H1 (cell line): ENCODE measurements at regions of chr2 and their contacts with region 1.

Region 1: DNA sequence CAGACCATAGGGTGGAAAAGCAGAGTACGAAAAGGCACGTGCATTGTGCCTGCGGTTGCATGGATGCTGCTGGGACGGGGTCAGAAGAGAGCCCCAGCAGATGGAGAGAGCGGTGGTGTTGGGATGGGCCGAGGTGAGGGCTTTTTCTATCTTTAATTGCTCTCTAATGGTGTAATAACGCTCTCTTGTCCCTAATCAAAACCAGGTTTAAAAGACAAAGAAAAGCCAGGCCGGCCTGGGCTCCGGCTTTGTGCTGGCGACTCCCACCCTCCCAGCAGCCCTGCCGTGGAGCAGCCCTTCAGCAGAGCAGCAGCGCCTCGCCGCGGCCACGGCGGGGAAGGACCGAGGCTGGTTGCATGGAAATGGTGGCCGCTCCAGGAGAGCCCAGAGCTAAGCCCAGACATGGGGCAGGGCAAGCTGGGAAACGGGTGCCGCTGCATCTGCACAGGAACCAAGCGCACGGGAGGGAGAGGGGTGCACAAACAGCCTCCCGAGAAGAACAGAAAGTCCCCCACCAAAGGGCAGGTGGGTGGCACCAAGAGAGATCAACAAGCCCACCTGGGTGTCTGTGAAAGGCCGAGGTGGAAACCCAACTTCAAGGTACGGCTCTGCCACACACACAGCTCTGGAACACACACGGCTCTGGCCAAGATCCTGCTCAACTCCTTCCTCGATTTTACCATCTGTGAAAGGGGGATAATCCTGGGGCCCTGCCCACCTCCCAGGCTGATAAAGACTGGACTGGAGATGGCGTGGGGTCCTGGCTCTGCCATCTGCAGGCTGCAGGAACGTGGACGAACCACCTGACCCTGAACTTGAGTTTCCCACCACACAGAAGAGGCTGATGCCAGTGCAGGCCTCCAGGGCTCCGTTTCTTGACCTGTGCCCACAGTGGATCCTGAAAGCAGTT is 15.0 kb downstream of the HS1BP3 start:
- DNase-seq: peak; percentile 70 to 96
- H3K4me3 ChIP-seq: no peak overlapping the region
- H3K27ac ChIP-seq: no peak overlapping the region
- H3K4me1 ChIP-seq: peaks cover 0 to 8% (median 3%) of the 10 kb centered on the region in 4 experiments; a peak in 4 of 7 replicates
- H3K27me3 ChIP-seq: no peaks in the 10 kb centered on the region
- CTCF ChIP-seq: peak in 2 of 3 experiments; percentile 98; a peak in 3 of 4 replicates
- EP300 ChIP-seq: no peak
- POLR2A ChIP-seq: no peak
- RAD21 ChIP-seq: peak; percentile 100

Region 2: GRCh38 chr2:20419007-20419576 is 216.8 kb before region 1 on chr2:
- CTCF ChIA-PET with region 1: interaction called, 261 read pairs
- POLR2A ChIA-PET with region 1: no interaction called
- DNase-seq: no peak
- H3K4me3 ChIP-seq: no peak overlapping the region
- H3K27ac ChIP-seq: no peak overlapping the region
- H3K4me1 ChIP-seq: peaks cover 0 to 4% (median 2%) of the 10 kb centered on the region in 4 experiments; a peak in 2 of 7 replicates
- H3K27me3 ChIP-seq: no peaks in the 10 kb centered on the region
- CTCF ChIP-seq: no peak
- EP300 ChIP-seq: no peak
- POLR2A ChIP-seq: no peak
- RAD21 ChIP-seq: no peak

Region 3: DNA sequence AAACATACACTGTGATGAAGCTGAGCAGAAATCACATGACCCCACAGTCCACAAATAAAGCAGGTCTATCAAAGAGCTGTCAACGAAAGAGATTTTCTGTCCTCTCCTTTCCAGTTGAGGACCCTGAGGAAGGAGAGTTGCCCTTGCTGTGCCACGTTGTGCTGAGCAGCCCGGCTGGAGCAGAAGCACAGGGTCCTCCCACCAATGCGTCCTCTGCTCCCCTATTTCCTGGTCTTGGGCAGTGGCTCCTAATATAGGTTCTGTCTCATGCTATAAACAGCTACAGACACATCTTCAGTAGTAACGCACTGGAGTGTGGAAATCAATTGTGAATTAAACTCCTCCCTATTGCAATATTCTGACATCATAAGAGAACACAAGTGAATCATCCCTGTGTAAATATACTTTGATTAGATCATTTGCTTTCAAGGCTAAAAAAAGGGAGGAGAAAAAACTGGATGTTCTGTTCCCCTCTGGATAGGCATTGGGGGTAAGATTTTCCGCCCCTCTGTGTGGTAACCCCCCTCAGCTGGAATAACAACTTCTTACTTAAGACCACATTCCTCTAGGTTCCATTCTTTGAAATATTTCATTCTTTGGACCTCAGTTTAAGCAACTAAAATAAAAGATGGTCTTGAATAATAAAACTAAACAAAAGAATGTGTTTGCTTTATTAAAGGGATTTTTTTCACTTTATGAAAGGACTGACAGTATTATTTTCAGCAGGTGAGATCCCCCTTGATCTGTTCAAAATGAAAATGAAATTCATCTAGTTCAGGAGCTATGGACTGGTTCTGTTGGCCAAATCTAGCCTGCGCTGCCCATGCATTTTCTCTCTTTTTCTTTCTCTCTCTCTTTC is 197.4 kb before region 1 on chr2:
- CTCF ChIA-PET with region 1: interaction called, 367 read pairs
- POLR2A ChIA-PET with region 1: interaction called, 5 read pairs
- DNase-seq: no peak
- H3K4me3 ChIP-seq: no peak overlapping the region
- H3K27ac ChIP-seq: no peak overlapping the region
- H3K4me1 ChIP-seq: no peaks in the 10 kb centered on the region
- H3K27me3 ChIP-seq: no peaks in the 10 kb centered on the region
- CTCF ChIP-seq: no peak
- EP300 ChIP-seq: no peak
- POLR2A ChIP-seq: no peak
- RAD21 ChIP-seq: no peak

Region 4: GRCh38 chr2:20584637-20585321 is 51.2 kb before region 1 on chr2:
- CTCF ChIA-PET with region 1: interaction called, 19 read pairs
- POLR2A ChIA-PET with region 1: no interaction called
- DNase-seq: peak; percentile 67 to 79
- H3K4me3 ChIP-seq: peak overlapping the region in 1 of 4 experiments; percentile 27; a peak in 2 of 8 replicates
- H3K27ac ChIP-seq: peak overlapping the region; percentile 12; the same call in 1 of the 2 replicates
- H3K4me1 ChIP-seq: peaks cover 7 to 16% (median 11%) of the 10 kb centered on the region in 4 experiments
- H3K27me3 ChIP-seq: no peaks in the 10 kb centered on the region
- CTCF ChIP-seq: no peak
- EP300 ChIP-seq: no peak
- POLR2A ChIP-seq: peak in 1 of 2 experiments; percentile 56; a peak in 1 of 3 replicates
- RAD21 ChIP-seq: no peak

Region 5: DNA sequence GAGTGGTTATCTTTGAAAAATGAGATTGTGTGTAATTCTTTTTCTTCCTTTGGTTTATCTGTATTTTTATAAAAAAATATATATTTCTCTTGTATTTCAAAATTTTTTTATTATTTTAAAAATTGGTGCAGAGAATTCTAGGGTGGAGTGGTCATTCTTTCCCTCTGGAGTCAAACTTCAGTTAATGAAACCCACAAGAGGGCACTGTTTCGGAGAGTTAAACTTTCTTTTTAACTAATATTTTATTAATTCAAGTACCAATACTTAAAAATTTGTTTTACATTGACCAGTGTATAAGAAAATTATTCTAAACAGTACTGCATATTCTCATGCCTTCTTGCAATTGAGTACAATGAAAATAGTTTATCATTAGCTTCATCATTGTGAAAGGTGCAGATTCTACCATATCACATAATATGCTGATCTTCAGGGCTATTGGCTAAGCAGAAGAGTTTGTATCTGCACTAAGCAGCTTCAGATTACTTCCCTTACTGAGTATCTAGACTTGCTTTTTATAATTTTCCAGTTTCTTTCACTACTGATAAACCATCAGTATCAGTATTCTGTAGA is 35.1 kb before region 1 on chr2:
- CTCF ChIA-PET with region 1: interaction called, 82 read pairs
- POLR2A ChIA-PET with region 1: interaction called, 3 read pairs
- DNase-seq: no peak
- H3K4me3 ChIP-seq: no peak overlapping the region
- H3K27ac ChIP-seq: no peak overlapping the region
- H3K4me1 ChIP-seq: peaks cover 0 to 1% (median 0%) of the 10 kb centered on the region in 4 experiments; a peak in 3 of 7 replicates
- H3K27me3 ChIP-seq: no peaks in the 10 kb centered on the region
- CTCF ChIP-seq: peak in 2 of 3 experiments; percentile 18 to 25; a peak in 2 of 4 replicates
- EP300 ChIP-seq: no peak
- POLR2A ChIP-seq: no peak
- RAD21 ChIP-seq: peak in 1 of 2 experiments; percentile 25; a peak in 2 of 4 replicates

Region 6: GRCh38 chr2:20625491-20626391 is 10.2 kb before region 1 on chr2:
- CTCF ChIA-PET with region 1: interaction called, 24 read pairs
- POLR2A ChIA-PET with region 1: interaction called, 3 read pairs
- DNase-seq: no peak
- H3K4me3 ChIP-seq: no peak overlapping the region
- H3K27ac ChIP-seq: no peak overlapping the region
- H3K4me1 ChIP-seq: no peaks in the 10 kb centered on the region
- H3K27me3 ChIP-seq: no peaks in the 10 kb centered on the region
- CTCF ChIP-seq: no peak
- EP300 ChIP-seq: no peak
- POLR2A ChIP-seq: no peak
- RAD21 ChIP-seq: no peak

Region 7: GRCh38 chr2:20667531-20668401 is 31.8 kb after region 1 on chr2:
- CTCF ChIA-PET with region 1: no interaction called
- POLR2A ChIA-PET with region 1: no interaction called
- DNase-seq: peak in 1 of 2 experiments; percentile 64
- H3K4me3 ChIP-seq: peak overlapping the region; percentile 40 to 60 (median 48)
- H3K27ac ChIP-seq: no peak overlapping the region
- H3K4me1 ChIP-seq: peaks cover 4 to 33% (median 18%) of the 10 kb centered on the region in 4 experiments
- H3K27me3 ChIP-seq: peaks cover 82 to 96% (median 95%) of the 10 kb centered on the region in 4 experiments
- CTCF ChIP-seq: no peak
- EP300 ChIP-seq: no peak
- POLR2A ChIP-seq: no peak
- RAD21 ChIP-seq: no peak